ENCODE measurements at regions of chr12 and their contacts with region 1.

Region 1: DNA sequence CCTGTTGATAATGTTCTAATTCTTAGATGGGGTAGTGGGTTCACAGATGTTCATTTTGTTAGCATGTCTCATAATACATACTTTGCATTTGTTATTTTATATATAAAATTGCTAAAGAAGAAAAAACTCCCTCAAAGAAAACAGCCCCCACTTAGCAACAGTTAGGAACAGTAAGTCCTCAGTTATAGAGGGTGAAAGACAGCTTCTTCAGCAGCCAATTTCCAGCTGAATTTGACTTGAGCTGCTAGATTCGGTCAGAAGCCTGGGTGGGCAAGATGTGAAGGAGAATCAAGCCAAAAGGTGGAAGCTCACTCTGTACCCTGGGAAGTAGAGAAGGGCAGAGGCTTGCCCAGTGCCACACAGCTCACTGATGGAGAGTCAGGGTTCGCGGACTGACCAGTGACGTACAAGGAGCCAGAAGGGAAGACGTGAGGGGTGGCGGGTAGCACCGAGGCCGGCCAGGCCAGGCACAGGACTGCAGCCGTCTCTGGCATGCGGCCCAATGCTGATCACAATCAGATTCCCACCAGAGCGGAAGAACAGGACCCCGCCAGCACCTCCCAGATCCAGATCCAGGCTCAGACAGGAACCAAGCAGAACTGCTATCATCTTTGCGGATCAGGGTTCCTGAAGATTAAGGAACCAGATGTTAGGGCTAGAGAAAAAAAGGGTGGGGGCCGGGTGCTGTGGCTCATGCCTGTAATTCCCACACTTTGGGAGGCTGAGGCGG is 30.4 kb upstream of the VWF start:
- DNase-seq: peak; percentile 83 to 89
- ATAC-seq: peak; percentile 84 to 97 (median 95)
- H3K4me3 ChIP-seq: no peak overlapping the region
- H3K27ac ChIP-seq: peak overlapping the region; percentile 10 to 87 (median 72)
- H3K4me1 ChIP-seq: peaks cover 0 to 42% (median 9%) of the 10 kb centered on the region in 9 donors
- H3K27me3 ChIP-seq: peaks cover 0 to 16% (median 0%) of the 10 kb centered on the region in 7 donors
- CTCF ChIP-seq: no peak

Region 2: DNA sequence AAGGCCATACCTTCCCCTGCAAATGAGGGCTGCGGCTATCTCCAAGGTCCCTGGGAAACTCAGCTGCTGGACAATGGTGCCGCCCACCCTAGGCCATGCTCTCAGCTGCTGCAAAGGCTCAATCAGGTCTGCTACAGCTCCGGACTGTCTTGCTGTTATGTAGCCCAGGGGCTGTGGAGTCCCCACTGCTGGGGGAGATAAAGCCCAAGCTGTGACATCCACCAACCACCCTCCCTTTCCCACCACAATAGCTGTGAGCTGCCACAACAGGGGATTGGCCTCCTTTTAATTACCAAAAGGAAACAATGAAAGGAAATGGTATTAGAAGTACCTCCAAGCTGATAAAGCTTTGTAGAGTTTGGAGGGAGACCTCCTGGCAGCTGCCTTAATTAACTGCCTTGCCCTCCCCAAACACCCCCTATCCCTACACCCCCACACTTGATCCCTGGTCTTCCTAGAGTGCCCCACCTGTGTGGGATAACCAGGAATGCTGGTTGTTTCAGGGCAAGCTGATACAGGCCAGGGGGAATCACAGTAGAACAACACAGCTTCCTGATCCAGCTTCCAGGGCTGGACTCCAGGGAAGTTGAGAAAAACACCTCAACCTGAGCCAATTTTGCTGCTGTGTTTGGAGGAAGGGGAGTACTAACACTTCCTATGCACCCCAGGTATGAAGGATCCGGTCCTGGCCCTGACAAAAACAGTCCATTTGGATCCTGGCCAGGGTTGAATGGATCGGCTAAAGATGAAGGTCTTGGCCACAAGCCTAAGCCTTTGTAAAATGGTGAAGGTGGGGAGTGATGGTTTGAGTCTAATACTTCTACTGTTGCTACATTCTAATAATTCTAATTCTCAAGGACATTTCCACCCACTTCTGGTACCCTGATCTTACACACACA is 30.2 kb before region 1 on chr12 and contains the start of gene VWF:
- intact Hi-C with region 1: loop called in 2 of 10 experiments (anchors 2 kb)
- DNase-seq: peak in 1 of 2 donors; percentile 77
- ATAC-seq: peak; percentile 65 to 84 (median 78)
- H3K4me3 ChIP-seq: peak within 1 kb of the TSS; percentile 38 to 64 (median 51)
- H3K27ac ChIP-seq: peak within 1 kb of the TSS; percentile 84 to 91 (median 89)
- H3K4me1 ChIP-seq: peaks cover 0 to 22% (median 4%) of the 10 kb centered on the region in 9 donors
- H3K27me3 ChIP-seq: peaks cover 0 to 7% (median 0%) of the 10 kb centered on the region in 7 donors
- CTCF ChIP-seq: no peak
- total RNA-seq, gene VWF: 163 to 480 (median 275) TPM

Region 3: DNA sequence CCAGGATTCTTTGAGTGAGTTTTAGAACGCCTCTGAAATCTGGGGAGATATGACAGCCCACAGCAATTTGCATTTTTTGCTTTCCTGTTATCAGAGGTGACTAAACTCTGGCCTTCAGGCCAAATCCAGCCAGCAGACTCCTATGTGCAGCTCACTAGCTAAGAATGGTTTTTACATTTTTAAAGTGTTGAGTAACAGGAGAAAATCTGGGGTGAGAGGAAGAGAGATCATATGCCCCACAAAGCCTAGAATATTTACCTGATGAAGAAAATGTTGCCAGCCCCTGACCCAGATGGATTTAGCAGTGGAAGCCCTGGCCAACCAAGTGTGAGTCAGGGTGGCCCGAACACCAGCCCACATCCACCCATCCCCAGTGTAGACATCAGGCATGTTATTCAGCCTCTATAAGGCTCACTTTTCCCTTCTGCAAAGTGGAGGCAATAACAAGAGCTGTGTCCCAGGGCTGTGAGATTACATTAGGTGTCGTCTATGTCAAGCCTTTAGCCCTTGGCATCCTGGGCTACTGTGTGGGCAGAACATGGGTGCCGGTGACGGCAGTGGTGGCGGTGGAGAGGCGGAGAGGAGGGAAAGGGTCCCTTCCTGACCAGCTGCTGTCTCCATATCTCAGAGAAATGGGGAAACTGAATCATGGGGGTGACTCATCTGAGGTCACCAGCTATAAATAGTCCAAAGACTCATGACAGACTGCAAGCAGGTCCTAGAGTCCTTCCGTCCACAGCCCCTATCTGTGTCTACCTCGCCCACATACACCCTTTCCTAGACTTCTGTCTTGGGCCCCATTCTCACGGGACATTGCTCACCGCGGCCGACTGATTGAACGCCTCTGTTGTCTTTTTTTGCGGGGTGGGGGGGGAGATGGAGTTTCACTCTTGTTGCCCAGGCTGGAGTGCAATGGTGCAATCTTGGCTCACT is 12.7 kb after region 1 on chr12:
- intact Hi-C with region 1: loop called in 1 of 10 experiments (anchors 2 kb)
- DNase-seq: peak in 1 of 2 donors; percentile 80
- ATAC-seq: peak; percentile 53 to 92 (median 78)
- H3K4me3 ChIP-seq: no peak overlapping the region
- H3K27ac ChIP-seq: peak overlapping the region; percentile 3 to 90 (median 78)
- H3K4me1 ChIP-seq: peaks cover 12 to 55% (median 39%) of the 10 kb centered on the region in 9 donors
- H3K27me3 ChIP-seq: no peaks in the 10 kb centered on the region
- CTCF ChIP-seq: no peak

Region 4: GRCh38 chr12:6182116-6182898 is 27.4 kb after region 1 on chr12:
- intact Hi-C with region 1: no loop called
- DNase-seq: peak; percentile 59 to 69
- ATAC-seq: peak; percentile 46 to 79 (median 76)
- H3K4me3 ChIP-seq: peak overlapping the region in 2 of 10 donors; percentile 6 to 21
- H3K27ac ChIP-seq: peak overlapping the region; percentile 50 to 80 (median 66)
- H3K4me1 ChIP-seq: peaks cover 21 to 69% (median 44%) of the 10 kb centered on the region in 9 donors
- H3K27me3 ChIP-seq: no peaks in the 10 kb centered on the region
- CTCF ChIP-seq: no peak